ENCODE measurements at regions of chr5 and their contacts with region 1.

Region 1: DNA sequence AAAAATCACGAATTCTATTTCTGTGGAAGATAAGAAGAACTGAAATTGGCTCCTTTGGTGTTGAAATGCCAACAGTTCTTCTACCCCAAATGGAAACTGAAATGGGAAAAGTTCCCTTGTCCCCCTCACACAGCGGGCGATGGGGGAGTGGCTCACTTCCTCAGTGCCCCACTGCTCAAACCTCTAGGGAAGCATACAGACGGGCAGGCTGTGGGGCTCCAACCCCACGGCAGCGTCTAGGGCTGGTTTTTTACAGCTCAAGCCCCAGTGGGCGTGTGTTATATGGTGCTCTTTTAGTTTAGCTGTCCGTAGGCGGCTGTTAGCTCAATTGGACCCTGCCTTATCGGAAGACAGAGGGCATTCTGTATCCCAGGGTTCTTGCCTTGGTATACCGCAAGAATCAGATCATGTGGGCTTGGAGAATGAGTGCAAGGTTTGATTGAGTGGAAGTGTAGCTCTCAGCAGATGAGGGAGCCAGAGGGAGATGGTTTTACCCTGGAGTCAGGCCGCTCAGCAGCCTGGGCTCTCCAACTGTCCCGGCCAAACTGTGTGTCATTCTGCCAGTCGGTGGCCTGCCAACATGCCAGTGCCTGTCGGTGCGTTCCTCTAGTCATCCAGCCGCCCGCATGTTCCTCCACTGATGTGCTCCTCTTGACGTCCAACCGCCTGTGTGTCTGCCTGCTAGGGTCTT is 166.3 kb upstream of the ZNF608 start:
- DNase-seq: peak in 2 of 3 donors; percentile 54 to 56
- ATAC-seq: peak in 1 of 2 donors; percentile 28
- H3K4me3 ChIP-seq: no peak overlapping the region
- H3K27ac ChIP-seq: no peak overlapping the region
- H3K4me1 ChIP-seq: peaks cover 2% of the 10 kb centered on the region
- H3K27me3 ChIP-seq: no peaks in the 10 kb centered on the region

Region 2: GRCh38 chr5:124996764-124997077 is 83.9 kb after region 1 on chr5:
- intact Hi-C with region 1: loop called in 1 of 4 experiments (anchors 10 kb)
- DNase-seq: no peak
- ATAC-seq: no peak
- H3K4me3 ChIP-seq: no peak overlapping the region
- H3K27ac ChIP-seq: no peak overlapping the region
- H3K4me1 ChIP-seq: no peaks in the 10 kb centered on the region
- H3K27me3 ChIP-seq: no peaks in the 10 kb centered on the region